WTC11 (cell line): ENCODE measurements at regions of chr6 and their contacts with region 1.

Region 1: DNA sequence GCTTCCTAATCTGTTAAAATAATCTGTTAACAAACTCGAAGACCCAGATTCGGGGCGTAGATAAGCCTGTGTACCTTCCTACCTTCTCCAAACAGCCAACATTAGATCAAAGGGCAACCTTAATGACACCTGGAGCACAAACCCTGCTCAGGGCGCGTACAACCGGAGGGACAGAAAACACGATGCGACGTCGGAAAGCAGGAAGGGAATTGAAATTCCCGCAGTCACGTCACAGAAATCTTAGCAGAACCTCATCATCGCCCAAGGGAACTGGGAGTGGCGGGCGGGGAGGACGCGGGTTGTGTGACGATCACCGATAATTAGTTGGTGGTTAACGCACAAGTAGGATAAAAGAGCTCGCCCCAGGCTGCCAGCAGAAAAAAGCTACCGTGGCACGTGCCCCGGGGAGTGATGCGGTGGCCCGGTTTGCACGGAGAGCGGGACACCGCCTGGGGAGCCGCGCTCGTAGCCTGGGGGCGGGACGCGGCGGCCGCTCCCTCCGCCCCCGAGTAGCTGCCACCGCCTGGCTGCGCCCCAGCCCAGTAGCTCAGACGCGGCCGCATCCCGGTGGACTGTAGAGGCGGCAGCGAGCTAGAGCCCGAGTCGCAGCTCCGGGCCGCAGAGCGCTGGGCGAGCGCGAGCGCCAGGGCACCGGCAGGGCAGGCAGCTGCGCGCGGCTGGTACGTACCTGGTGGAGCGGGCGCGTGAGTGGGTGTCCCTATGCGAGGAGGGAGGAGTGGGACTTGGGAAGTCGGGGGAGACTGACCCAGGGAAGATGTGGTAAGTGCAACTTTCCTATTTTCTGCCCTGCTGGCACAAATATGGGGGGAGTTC is at the start of gene PKIB:
- DNase-seq: peak; percentile 85
- ATAC-seq: peak; percentile 98
- H3K4me3 Mint-ChIP-seq: peak within 1 kb of the TSS; percentile 85
- H3K27ac Mint-ChIP-seq: no peak within 1 kb of the TSS
- H3K4me1 Mint-ChIP-seq: peaks cover 13% of the 10 kb centered on the region
- H3K27me3 Mint-ChIP-seq: peaks cover 46% of the 10 kb centered on the region
- CTCF ChIP-seq: no peak
- total RNA-seq, gene PKIB: 24.6 to 26.4 TPM (median 25.7 TPM) in 3 replicates

Region 2: GRCh38 chr6:122491919-122492555 is 118.0 kb before region 1 on chr6:
- CTCF ChIA-PET with region 1: interaction called, 10 read pairs
- POLR2A ChIA-PET with region 1: no interaction called
- DNase-seq: peak; percentile 73
- ATAC-seq: peak; percentile 98
- H3K4me3 Mint-ChIP-seq: no peak overlapping the region
- H3K27ac Mint-ChIP-seq: no peak overlapping the region
- H3K4me1 Mint-ChIP-seq: peaks cover 7% of the 10 kb centered on the region
- H3K27me3 Mint-ChIP-seq: no peaks in the 10 kb centered on the region
- CTCF ChIP-seq: peak; percentile 70; the same call in 1 of the 2 replicates

Region 3: DNA sequence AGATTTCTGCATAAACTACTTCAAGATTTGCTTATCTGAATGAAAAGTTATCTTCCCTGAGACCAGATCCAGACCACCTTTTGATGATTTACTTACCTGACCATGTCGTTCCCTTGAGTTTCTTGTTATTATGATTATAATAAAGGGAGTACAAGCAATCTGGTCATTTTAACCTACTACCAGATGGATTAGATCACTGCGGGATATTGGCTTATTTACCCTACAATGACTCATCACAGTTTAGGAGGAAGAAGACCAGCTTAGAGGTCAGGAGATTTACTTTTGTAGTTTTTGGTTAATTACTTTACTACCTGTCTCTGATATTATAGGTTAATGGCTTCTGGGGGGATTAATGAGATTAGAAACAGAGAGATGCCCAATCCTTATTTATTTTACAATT is 10.8 kb after region 1 on chr6:
- CTCF ChIA-PET with region 1: interaction called, 12 read pairs
- POLR2A ChIA-PET with region 1: no interaction called
- DNase-seq: no peak
- ATAC-seq: no peak
- H3K4me3 Mint-ChIP-seq: no peak overlapping the region
- H3K27ac Mint-ChIP-seq: no peak overlapping the region
- H3K4me1 Mint-ChIP-seq: peaks cover 6% of the 10 kb centered on the region; the same call in 1 of the 2 replicates
- H3K27me3 Mint-ChIP-seq: no peaks in the 10 kb centered on the region
- CTCF ChIP-seq: no peak

Region 4: GRCh38 chr6:122845916-122846612 is 236.0 kb after region 1 on chr6:
- CTCF ChIA-PET with region 1: no interaction called
- POLR2A ChIA-PET with region 1: no interaction called
- DNase-seq: no peak
- ATAC-seq: no peak
- H3K4me3 Mint-ChIP-seq: no peak overlapping the region
- H3K27ac Mint-ChIP-seq: peak overlapping the region; percentile 91
- H3K4me1 Mint-ChIP-seq: peaks cover 33% of the 10 kb centered on the region
- H3K27me3 Mint-ChIP-seq: peaks cover 10% of the 10 kb centered on the region
- CTCF ChIP-seq: no peak